ENCODE measurements at regions of chr13 and their contacts with region 1.

Region 1: GRCh38 chr13:98576963-98577822 is at the start of gene STK24:
- DNase-seq: peak; percentile 64 to 83 (median 72)
- H3K4me3 ChIP-seq: peak within 1 kb of the TSS; percentile 62 to 96 (median 79)
- H3K27ac ChIP-seq: peak within 1 kb of the TSS; percentile 67 to 100 (median 96)
- H3K4me1 ChIP-seq: peaks cover 0 to 40% of the 10 kb centered on the region in 2 donors
- H3K27me3 ChIP-seq: no peaks in the 10 kb centered on the region
- CTCF ChIP-seq: no peak
- POLR2A ChIP-seq: peak; percentile 56 to 70
- total RNA-seq, gene STK24: 29.2 to 72.2 (median 57.1) TPM

Region 2: GRCh38 chr13:98405107-98405571 is 172.1 kb before region 1 on chr13:
- intact Hi-C with region 1: no loop called
- DNase-seq: no peak
- H3K4me3 ChIP-seq: no peak overlapping the region
- H3K27ac ChIP-seq: no peak overlapping the region
- H3K4me1 ChIP-seq: peaks cover 0 to 8% of the 10 kb centered on the region in 2 donors
- H3K27me3 ChIP-seq: no peaks in the 10 kb centered on the region
- CTCF ChIP-seq: no peak
- POLR2A ChIP-seq: no peak

Region 3: GRCh38 chr13:98454389-98454881 is 122.8 kb before region 1 on chr13:
- intact Hi-C with region 1: loop called in 1 of 2 experiments (anchors 10 kb)
- DNase-seq: peak in 3 of 7 donors; percentile 45 to 49 (median 48)
- H3K4me3 ChIP-seq: no peak overlapping the region
- H3K27ac ChIP-seq: peak overlapping the region in 4 of 5 donors; percentile 40 to 75 (median 68)
- H3K4me1 ChIP-seq: peaks cover 6 to 19% of the 10 kb centered on the region in 2 donors
- H3K27me3 ChIP-seq: no peaks in the 10 kb centered on the region
- CTCF ChIP-seq: no peak
- POLR2A ChIP-seq: peak in 1 of 2 donors; percentile 42

Region 4: DNA sequence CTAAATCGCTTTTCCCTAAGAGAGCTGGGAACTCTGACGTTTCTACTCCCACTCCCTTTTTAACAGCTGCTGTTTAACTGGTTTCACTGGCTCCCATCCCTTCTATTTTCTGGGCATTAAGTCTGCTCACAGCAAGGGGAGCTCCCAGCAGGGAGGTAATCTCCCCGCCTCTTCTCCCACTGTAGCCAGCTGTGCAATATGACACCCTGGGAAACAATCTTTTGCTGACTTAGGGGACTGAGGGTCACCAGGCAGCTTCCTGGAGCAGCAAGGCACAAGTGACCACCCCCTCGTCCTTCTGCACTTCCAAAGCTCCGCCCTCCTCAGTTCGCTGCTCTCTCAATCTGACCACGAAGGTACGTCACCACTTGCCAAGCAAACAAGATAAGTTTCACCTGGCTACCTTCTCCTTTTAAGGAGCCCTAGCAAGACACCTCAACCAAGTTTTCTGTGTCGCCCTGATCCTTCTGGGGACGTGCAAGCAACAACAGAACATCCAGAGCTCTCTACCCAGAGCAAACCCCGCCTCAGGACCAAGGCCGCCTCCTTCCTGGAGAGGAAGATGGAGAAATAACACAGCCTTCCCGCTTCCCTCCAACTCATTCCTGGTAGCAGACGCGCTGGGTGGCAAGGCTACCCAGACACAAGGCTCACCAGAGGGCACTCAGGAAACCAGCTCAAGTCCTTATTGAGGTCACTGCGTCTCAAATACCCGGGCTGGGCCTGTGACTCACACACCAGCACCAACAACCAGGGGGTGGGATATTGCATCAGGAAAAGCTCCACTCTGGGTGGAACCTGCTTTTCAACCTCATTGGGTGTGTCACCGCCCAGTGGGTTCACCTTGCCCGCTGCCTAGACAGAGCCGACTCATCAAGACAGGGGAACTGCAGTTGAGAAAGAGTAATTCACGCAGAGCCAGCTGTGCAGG is 92.6 kb before region 1 on chr13:
- intact Hi-C with region 1: loop called in 1 of 2 experiments (anchors 10 kb)
- DNase-seq: peak; percentile 79 to 97 (median 94)
- H3K4me3 ChIP-seq: no peak overlapping the region
- H3K27ac ChIP-seq: peak overlapping the region; percentile 31 to 87 (median 71)
- H3K4me1 ChIP-seq: peaks cover 34 to 56% of the 10 kb centered on the region in 2 donors
- H3K27me3 ChIP-seq: no peaks in the 10 kb centered on the region
- CTCF ChIP-seq: no peak
- POLR2A ChIP-seq: peak in 1 of 2 donors; percentile 60

Region 5: GRCh38 chr13:98523455-98524102 is 53.6 kb before region 1 on chr13:
- intact Hi-C with region 1: loop called in 1 of 2 experiments (anchors 10 kb)
- DNase-seq: no peak
- H3K4me3 ChIP-seq: no peak overlapping the region
- H3K27ac ChIP-seq: no peak overlapping the region
- H3K4me1 ChIP-seq: peaks cover 8 to 15% of the 10 kb centered on the region in 2 donors
- H3K27me3 ChIP-seq: no peaks in the 10 kb centered on the region
- CTCF ChIP-seq: no peak
- POLR2A ChIP-seq: no peak